ENCODE measurements at regions of chr11 and their contacts with region 1.

Region 1: GRCh38 chr11:65988791-65989592 is 13.0 kb downstream of the EIF1AD start:
- DNase-seq: peak; percentile 82 to 92 (median 82)
- ATAC-seq: peak; percentile 96
- H3K4me3 ChIP-seq: no peak overlapping the region
- H3K27ac ChIP-seq: no peak overlapping the region
- H3K4me1 ChIP-seq: no peaks in the 10 kb centered on the region
- H3K27me3 ChIP-seq: no peaks in the 10 kb centered on the region

Region 2: GRCh38 chr11:65700391-65700790 is 288.6 kb before region 1 on chr11:
- intact Hi-C with region 1: loop called in 2 of 4 experiments (anchors 5 to 10 kb)
- DNase-seq: no peak
- ATAC-seq: no peak
- H3K4me3 ChIP-seq: no peak overlapping the region
- H3K27ac ChIP-seq: no peak overlapping the region
- H3K4me1 ChIP-seq: no peaks in the 10 kb centered on the region
- H3K27me3 ChIP-seq: no peaks in the 10 kb centered on the region

Region 3: DNA sequence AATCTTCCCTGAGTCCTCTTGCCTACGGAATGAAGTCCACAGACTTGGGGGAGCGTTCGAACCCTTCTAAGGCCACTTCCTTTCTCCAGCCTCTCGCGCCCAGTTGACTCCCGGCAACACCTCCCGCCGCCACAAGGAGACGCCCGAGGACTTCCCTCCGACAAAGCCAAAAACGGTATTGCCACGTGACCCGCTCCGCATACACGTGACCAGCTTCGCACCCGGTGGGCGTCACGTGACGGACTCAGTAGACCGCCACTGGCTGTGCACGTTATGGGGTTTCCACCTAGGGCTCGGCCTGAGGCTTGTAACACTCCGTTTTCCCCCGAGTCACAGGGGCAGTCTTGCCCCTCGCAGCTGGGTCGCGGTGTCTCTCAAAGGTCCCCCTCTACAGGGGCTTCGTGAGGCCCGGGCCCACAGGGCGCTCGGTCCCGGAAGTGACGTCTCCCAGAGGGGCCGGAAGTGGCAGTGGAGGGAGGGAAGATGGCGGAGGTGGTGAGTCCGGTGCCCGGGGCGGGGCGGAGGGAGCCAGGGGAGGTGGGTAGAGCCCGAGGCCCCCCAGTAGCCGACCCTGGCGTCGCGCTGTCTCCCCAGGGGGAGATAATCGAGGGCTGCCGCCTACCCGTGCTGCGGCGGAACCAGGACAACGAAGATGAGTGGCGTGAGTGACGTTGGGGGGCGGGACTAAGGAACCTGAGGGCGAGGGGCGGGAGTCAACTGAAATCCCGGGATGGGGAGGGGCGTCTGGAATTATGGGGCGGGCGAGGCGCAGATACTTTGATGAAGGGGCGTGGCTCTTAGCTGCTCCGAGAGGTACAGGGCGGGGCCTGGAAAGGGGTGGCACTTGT is 277.0 kb before region 1 on chr11 and contains the start of gene KAT5:
- intact Hi-C with region 1: loop called in 3 of 4 experiments (anchors 5 to 10 kb)
- DNase-seq: peak; percentile 98 to 99 (median 99)
- ATAC-seq: peak; percentile 93
- H3K4me3 ChIP-seq: peak within 1 kb of the TSS; percentile 77
- H3K27ac ChIP-seq: peak within 1 kb of the TSS; percentile 96
- H3K4me1 ChIP-seq: peaks cover 4% of the 10 kb centered on the region
- H3K27me3 ChIP-seq: no peaks in the 10 kb centered on the region
- total RNA-seq, gene KAT5: 49.0 to 57.2 (median 54.0) TPM

Region 4: DNA sequence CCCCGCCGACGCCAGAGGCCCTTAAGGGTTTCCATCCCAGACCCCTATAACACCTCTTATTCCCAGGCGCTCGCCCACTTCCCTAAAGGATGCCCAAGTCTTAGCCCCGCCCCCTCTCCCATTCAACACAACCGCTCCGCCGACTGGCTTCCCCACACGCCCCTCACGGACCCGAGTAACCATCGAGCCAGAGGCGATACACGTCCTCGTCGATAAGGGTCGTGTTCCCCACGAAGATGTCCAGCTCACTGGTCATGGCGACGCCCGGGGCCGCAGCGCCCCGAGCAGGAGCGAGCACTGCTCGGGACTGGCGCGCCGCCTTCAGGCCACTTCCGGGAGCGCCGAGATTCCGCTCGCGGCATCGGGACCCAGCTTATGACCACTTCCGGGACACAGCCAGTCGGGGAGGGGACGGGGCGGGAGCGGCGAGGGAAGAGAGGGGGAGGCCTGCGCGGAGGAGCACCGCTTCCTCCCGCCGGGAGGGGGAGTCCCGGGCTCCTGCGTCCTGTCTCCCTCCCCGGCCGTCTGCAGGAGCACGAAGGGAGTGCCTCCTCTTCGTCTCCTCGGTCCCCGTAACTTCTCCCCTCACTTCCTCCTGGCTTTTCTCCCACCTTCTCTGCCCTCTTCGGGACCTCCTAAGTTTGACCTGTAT is 100.7 kb before region 1 on chr11 and contains the start of gene FIBP:
- intact Hi-C with region 1: loop called (anchors 2 to 5 kb)
- DNase-seq: peak; percentile 98 to 99 (median 99)
- ATAC-seq: peak; percentile 83 to 87
- H3K4me3 ChIP-seq: peak within 1 kb of the TSS; percentile 55
- H3K27ac ChIP-seq: peak within 1 kb of the TSS; percentile 97
- H3K4me1 ChIP-seq: peaks cover 7% of the 10 kb centered on the region
- H3K27me3 ChIP-seq: no peaks in the 10 kb centered on the region
- total RNA-seq, gene FIBP: 39.7 to 46.6 (median 42.8) TPM